CD4-positive, alpha-beta T cell (primary cell): ENCODE measurements at regions of chr16 and their contacts with region 1.

Region 1: GRCh38 chr16:28211712-28212534 is at the start of gene XPO6:
- DNase-seq: peak; percentile 96 to 100 (median 99)
- ATAC-seq: peak; percentile 83
- H3K4me3 ChIP-seq: peak within 1 kb of the TSS; percentile 98
- H3K4me3 Mint-ChIP-seq: peak within 1 kb of the TSS; percentile 89
- H3K27ac ChIP-seq: peak within 1 kb of the TSS; percentile 66 to 80
- H3K27ac Mint-ChIP-seq: peak within 1 kb of the TSS; percentile 81
- H3K4me1 ChIP-seq: peaks cover 35% of the 10 kb centered on the region
- H3K4me1 Mint-ChIP-seq: peaks cover 45% of the 10 kb centered on the region
- H3K27me3 ChIP-seq: no peaks in the 10 kb centered on the region
- H3K27me3 Mint-ChIP-seq: no peaks in the 10 kb centered on the region
- CTCF ChIP-seq: no peak
- total RNA-seq, gene XPO6: 378 to 390 TPM

Region 2: DNA sequence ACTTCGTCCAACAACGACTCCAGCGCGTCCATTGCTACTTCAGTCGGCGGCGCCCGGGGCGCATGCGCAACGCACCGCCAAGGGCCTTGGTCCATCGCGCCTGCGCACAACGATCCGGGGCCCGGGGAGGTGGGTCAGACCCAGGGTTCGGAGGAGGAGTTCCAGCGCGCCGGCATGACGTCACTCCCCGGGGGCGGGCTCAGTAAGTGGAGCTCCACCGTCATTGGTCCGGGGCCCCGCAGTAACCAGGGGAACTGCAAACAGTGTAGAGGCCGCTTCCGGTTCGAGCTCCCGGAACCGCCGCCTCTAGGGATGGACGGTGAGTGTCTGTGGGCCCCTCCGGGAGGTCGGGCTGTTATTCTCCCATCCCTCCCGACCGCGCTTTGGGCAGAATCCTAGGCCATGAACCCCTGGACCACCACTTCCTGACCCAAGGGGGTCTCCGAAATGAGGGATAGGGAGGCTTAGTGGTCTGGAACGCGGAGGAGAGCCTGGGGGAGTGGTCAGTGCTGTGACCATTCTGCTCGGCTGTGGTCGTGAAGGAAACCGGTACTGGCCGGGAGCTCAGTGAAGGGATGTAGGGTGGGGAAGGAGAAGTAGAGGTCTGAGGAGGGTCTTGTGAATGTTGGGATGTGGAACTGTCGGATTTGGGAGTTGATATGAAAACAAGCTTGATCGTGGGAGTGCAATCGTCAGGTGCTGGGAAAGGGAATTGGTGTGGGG is 661.9 kb before region 1 on chr16 and contains the starts of genes GTF3C1 and KATNIP:
- CTCF ChIA-PET with region 1: no interaction called
- POLR2A ChIA-PET with region 1: no interaction called
- intact Hi-C with region 1: loop called in 1 of 2 experiments (anchors 5 kb)
- DNase-seq: peak; percentile 100
- ATAC-seq: peak; percentile 100
- H3K4me3 ChIP-seq: peak within 1 kb of the TSS; percentile 99
- H3K4me3 Mint-ChIP-seq: peak within 1 kb of the TSS; percentile 98
- H3K27ac ChIP-seq: peak within 1 kb of the TSS; percentile 80 to 85
- H3K27ac Mint-ChIP-seq: peak within 1 kb of the TSS; percentile 98
- H3K4me1 ChIP-seq: peaks cover 32% of the 10 kb centered on the region
- H3K4me1 Mint-ChIP-seq: peaks cover 50% of the 10 kb centered on the region
- H3K27me3 ChIP-seq: no peaks in the 10 kb centered on the region
- H3K27me3 Mint-ChIP-seq: no peaks in the 10 kb centered on the region
- CTCF ChIP-seq: no peak
- total RNA-seq, gene GTF3C1: 43.6 to 44.5 TPM
- total RNA-seq, gene KATNIP: 18.5 to 20.9 TPM

Region 3: GRCh38 chr16:28164140-28164539 is 47.8 kb before region 1 on chr16:
- CTCF ChIA-PET with region 1: interaction called, 3 read pairs
- POLR2A ChIA-PET with region 1: interaction called, 11 read pairs
- intact Hi-C with region 1: loop called in 1 of 2 experiments (anchors 2 kb)
- DNase-seq: no peak
- ATAC-seq: no peak
- H3K4me3 ChIP-seq: no peak overlapping the region
- H3K4me3 Mint-ChIP-seq: peak overlapping the region; percentile 15
- H3K27ac ChIP-seq: peak overlapping the region in 1 of 2 donors; percentile 31
- H3K27ac Mint-ChIP-seq: peak overlapping the region; percentile 87
- H3K4me1 ChIP-seq: peaks cover 49% of the 10 kb centered on the region
- H3K4me1 Mint-ChIP-seq: peaks cover 95% of the 10 kb centered on the region
- H3K27me3 ChIP-seq: no peaks in the 10 kb centered on the region
- H3K27me3 Mint-ChIP-seq: no peaks in the 10 kb centered on the region
- CTCF ChIP-seq: no peak

Region 4: GRCh38 chr16:28193530-28194423 is 18.1 kb before region 1 on chr16:
- CTCF ChIA-PET with region 1: interaction called, 28 read pairs
- POLR2A ChIA-PET with region 1: interaction called, 48 read pairs
- intact Hi-C with region 1: loop called (anchors 1 kb)
- DNase-seq: peak in 8 of 14 experiments; percentile 15 to 73 (median 27)
- ATAC-seq: peak; percentile 13
- H3K4me3 ChIP-seq: peak overlapping the region; percentile 36
- H3K4me3 Mint-ChIP-seq: peak overlapping the region; percentile 74
- H3K27ac ChIP-seq: peak overlapping the region; percentile 88 to 89
- H3K27ac Mint-ChIP-seq: peak overlapping the region; percentile 93
- H3K4me1 ChIP-seq: peaks cover 78% of the 10 kb centered on the region
- H3K4me1 Mint-ChIP-seq: peaks cover 86% of the 10 kb centered on the region
- H3K27me3 ChIP-seq: no peaks in the 10 kb centered on the region
- H3K27me3 Mint-ChIP-seq: no peaks in the 10 kb centered on the region
- CTCF ChIP-seq: no peak

Region 5: DNA sequence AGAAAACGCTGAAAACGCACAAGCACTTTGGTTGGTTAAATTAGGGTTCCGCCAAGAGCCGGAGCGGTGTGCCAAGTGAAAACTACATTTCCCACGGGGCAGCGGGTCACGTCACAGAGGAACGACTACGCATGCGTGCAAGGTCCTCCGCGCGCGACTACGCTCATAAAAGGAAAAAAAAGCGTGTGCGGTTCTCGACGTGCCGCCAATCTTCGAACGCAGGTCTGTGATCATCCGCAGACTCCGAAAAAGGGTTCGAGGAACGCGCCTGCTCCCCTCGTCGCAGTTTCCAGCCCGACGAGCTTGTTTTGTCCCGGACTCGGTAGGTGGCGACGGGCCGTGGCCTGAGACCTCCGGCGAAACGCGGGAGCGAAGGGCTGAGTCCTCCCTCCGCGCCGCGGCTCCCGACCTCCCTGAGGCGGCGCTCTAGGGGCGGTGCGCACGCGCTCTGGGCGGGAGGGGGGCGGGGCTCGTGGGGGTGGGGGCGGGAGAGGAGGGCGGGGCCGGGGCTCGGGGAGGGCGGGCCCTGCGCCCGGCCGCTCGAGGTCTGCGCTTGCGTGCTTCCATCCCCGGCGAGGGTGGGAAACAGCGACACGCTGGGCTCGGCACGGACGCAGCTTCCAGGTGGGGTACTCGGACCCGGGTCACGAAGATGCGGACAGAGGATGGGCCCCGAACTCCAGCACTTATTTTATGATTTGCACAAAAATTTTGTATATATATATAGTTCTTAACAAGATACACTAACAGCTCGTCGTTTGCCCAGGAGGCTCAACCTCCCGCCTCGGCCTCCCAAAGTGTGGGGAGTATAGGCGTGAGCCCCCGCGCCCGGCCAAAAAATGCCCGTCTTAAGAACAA is 342.1 kb after region 1 on chr16 and contains the start of gene SGF29:
- CTCF ChIA-PET with region 1: no interaction called
- POLR2A ChIA-PET with region 1: no interaction called
- intact Hi-C with region 1: loop called in 1 of 2 experiments (anchors 10 kb)
- DNase-seq: peak; percentile 89 to 98 (median 93)
- ATAC-seq: peak; percentile 86
- H3K4me3 ChIP-seq: peak within 1 kb of the TSS; percentile 84
- H3K4me3 Mint-ChIP-seq: peak within 1 kb of the TSS; percentile 94
- H3K27ac ChIP-seq: peak within 1 kb of the TSS; percentile 90 to 98
- H3K27ac Mint-ChIP-seq: peak within 1 kb of the TSS; percentile 97
- H3K4me1 ChIP-seq: peaks cover 42% of the 10 kb centered on the region
- H3K4me1 Mint-ChIP-seq: peaks cover 43% of the 10 kb centered on the region
- H3K27me3 ChIP-seq: no peaks in the 10 kb centered on the region
- H3K27me3 Mint-ChIP-seq: no peaks in the 10 kb centered on the region
- CTCF ChIP-seq: peak; percentile 34
- total RNA-seq, gene SGF29: 38.9 to 40.3 TPM